ENCODE measurements at regions of chr10 and their contacts with region 1.

Region 1: GRCh38 chr10:13769955-13770354 is 183.2 kb downstream of the PRPF18 start:
- DNase-seq: peak; percentile 99
- H3K4me3 ChIP-seq: no peak overlapping the region
- H3K27ac ChIP-seq: peak overlapping the region; percentile 56
- H3K4me1 ChIP-seq: peaks cover 39% of the 10 kb centered on the region
- H3K27me3 ChIP-seq: no peaks in the 10 kb centered on the region
- CTCF ChIP-seq: no peak

Region 2: GRCh38 chr10:13669182-13669865 is 100.6 kb before region 1 on chr10:
- CTCF ChIA-PET with region 1: no interaction called
- dilution Hi-C with region 1: loop called (anchors 5 kb)
- in situ Hi-C with region 1: no loop called
- intact Hi-C with region 1: no loop called
- DNase-seq: no peak
- H3K4me3 ChIP-seq: no peak overlapping the region
- H3K27ac ChIP-seq: no peak overlapping the region
- H3K4me1 ChIP-seq: no peaks in the 10 kb centered on the region
- H3K27me3 ChIP-seq: no peaks in the 10 kb centered on the region
- CTCF ChIP-seq: no peak

Region 3: GRCh38 chr10:13707156-13707881 is 62.6 kb before region 1 on chr10:
- CTCF ChIA-PET with region 1: no interaction called
- dilution Hi-C with region 1: no loop called
- in situ Hi-C with region 1: loop called in 1 of 2 experiments (anchors 5 kb)
- intact Hi-C with region 1: loop called (anchors 1 kb)
- DNase-seq: peak; percentile 80
- H3K4me3 ChIP-seq: peak overlapping the region; percentile 66 to 83 (median 68)
- H3K27ac ChIP-seq: peak overlapping the region; percentile 11
- H3K4me1 ChIP-seq: peaks cover 29% of the 10 kb centered on the region
- H3K27me3 ChIP-seq: no peaks in the 10 kb centered on the region
- CTCF ChIP-seq: peak in 1 of 2 donors; percentile 1

Region 4: GRCh38 chr10:13712837-13713581 is 56.9 kb before region 1 on chr10:
- CTCF ChIA-PET with region 1: no interaction called
- dilution Hi-C with region 1: no loop called
- in situ Hi-C with region 1: loop called in 1 of 2 experiments (anchors 5 kb)
- intact Hi-C with region 1: loop called (anchors 1 kb)
- DNase-seq: peak; percentile 86
- H3K4me3 ChIP-seq: no peak overlapping the region
- H3K27ac ChIP-seq: peak overlapping the region; percentile 0
- H3K4me1 ChIP-seq: peaks cover 36% of the 10 kb centered on the region
- H3K27me3 ChIP-seq: no peaks in the 10 kb centered on the region
- CTCF ChIP-seq: no peak

Region 5: DNA sequence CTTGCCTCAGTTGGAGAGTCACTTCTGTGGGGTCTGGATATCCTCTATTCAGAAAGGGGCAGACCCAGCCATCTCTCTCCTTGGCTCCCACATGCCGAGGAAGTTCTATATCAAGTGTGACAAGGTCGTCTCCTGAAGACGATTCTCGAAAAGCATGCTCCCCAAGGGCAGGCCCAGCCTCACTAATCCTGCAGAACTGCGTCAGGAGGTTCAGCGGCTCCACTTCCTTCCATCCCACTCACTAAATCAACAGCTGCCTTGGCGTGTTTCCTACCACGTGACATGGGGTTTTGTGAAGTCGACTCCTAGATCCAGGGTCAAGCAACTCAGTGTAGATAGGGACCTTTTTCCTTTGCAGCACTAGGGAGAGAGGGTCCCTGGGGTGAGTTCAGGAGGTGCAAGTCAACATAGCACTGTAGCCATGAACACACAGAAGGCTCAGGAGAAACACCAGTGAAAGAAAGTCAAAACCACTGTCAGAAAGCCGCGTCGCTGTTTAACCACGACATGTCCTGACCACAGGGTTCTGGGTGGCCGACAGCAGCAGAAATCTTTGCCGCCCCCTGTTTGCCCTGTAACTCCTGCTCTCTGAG is 26.8 kb before region 1 on chr10:
- CTCF ChIA-PET with region 1: no interaction called
- dilution Hi-C with region 1: no loop called
- in situ Hi-C with region 1: no loop called
- intact Hi-C with region 1: loop called (anchors 2 kb)
- DNase-seq: no peak
- H3K4me3 ChIP-seq: no peak overlapping the region
- H3K27ac ChIP-seq: no peak overlapping the region
- H3K4me1 ChIP-seq: peaks cover 8% of the 10 kb centered on the region
- H3K27me3 ChIP-seq: no peaks in the 10 kb centered on the region
- CTCF ChIP-seq: no peak

Region 6: DNA sequence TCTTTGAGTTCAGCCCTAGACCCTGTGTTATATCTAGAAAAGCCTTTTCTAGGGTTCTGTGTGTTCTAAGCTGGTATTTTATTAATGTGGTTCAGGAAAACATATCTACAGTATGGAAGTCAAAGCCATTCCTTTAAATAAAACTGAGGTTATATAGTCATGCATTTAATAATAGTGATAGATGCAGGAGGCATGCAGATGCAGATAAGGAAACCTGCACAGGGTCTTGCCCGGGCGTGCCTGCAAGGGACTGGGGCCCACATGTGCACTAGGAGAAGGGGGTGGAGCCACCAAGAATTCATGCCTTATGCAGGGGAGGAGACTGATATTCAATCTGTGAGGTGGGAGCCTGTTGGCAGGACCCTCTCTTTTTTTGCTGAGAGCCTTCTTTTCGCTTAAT is 11.6 kb before region 1 on chr10:
- CTCF ChIA-PET with region 1: no interaction called
- dilution Hi-C with region 1: no loop called
- in situ Hi-C with region 1: no loop called
- intact Hi-C with region 1: loop called (anchors 1 kb)
- DNase-seq: peak; percentile 85
- H3K4me3 ChIP-seq: no peak overlapping the region
- H3K27ac ChIP-seq: peak overlapping the region; percentile 81
- H3K4me1 ChIP-seq: peaks cover 22% of the 10 kb centered on the region
- H3K27me3 ChIP-seq: no peaks in the 10 kb centered on the region
- CTCF ChIP-seq: no peak

Measured in mammary epithelial cell (primary cell).